Activated CD4-positive, alpha-beta T cell treated with anti-CD3 and anti-CD28 coated beads, Interleukin-2, amount 10 ng/mL, durations not matched to agents 24 days and 14 days (primary cell): ENCODE measurements at regions of chr1 and their contacts with region 1.

Region 1: GRCh38 chr1:54406339-54407153 is at the start of gene SSBP3:
- DNase-seq: peak; percentile 98
- H3K4me3 Mint-ChIP-seq: peak within 1 kb of the TSS; percentile 93
- H3K27ac Mint-ChIP-seq: peak within 1 kb of the TSS; percentile 96
- H3K4me1 Mint-ChIP-seq: peaks cover 64% of the 10 kb centered on the region
- H3K27me3 Mint-ChIP-seq: no peaks in the 10 kb centered on the region
- total RNA-seq, gene SSBP3: 84.1 and 87.9 TPM in 2 replicates

Region 2: GRCh38 chr1:52579415-52579814 is 1827.1 kb before region 1 on chr1:
- intact Hi-C with region 1: no loop called
- DNase-seq: no peak
- H3K4me3 Mint-ChIP-seq: no peak overlapping the region
- H3K27ac Mint-ChIP-seq: peak overlapping the region; percentile 1
- H3K4me1 Mint-ChIP-seq: peaks cover 14% of the 10 kb centered on the region
- H3K27me3 Mint-ChIP-seq: no peaks in the 10 kb centered on the region

Region 3: GRCh38 chr1:53837924-53838652 is 568.5 kb before region 1 on chr1 and contains the start of gene NDC1:
- intact Hi-C with region 1: loop called (anchors 5 kb)
- DNase-seq: peak; percentile 96
- H3K4me3 Mint-ChIP-seq: peak within 1 kb of the TSS; percentile 100
- H3K27ac Mint-ChIP-seq: peak within 1 kb of the TSS; percentile 100
- H3K4me1 Mint-ChIP-seq: peaks cover 25% of the 10 kb centered on the region
- H3K27me3 Mint-ChIP-seq: no peaks in the 10 kb centered on the region
- total RNA-seq, gene NDC1: 39.7 and 40.8 TPM in 2 replicates

Region 4: GRCh38 chr1:54199765-54200518 is 206.6 kb before region 1 on chr1 and contains the starts of genes CYB5RL and MRPL37:
- intact Hi-C with region 1: loop called (anchors 2 kb)
- DNase-seq: peak; percentile 98
- H3K4me3 Mint-ChIP-seq: peak within 1 kb of the TSS; percentile 88
- H3K27ac Mint-ChIP-seq: peak within 1 kb of the TSS; percentile 73
- H3K4me1 Mint-ChIP-seq: peaks cover 29% of the 10 kb centered on the region
- H3K27me3 Mint-ChIP-seq: no peaks in the 10 kb centered on the region
- total RNA-seq, gene CYB5RL: 10.1 and 11.3 TPM in 2 replicates
- total RNA-seq, gene MRPL37: 158 and 162 TPM in 2 replicates

Region 5: DNA sequence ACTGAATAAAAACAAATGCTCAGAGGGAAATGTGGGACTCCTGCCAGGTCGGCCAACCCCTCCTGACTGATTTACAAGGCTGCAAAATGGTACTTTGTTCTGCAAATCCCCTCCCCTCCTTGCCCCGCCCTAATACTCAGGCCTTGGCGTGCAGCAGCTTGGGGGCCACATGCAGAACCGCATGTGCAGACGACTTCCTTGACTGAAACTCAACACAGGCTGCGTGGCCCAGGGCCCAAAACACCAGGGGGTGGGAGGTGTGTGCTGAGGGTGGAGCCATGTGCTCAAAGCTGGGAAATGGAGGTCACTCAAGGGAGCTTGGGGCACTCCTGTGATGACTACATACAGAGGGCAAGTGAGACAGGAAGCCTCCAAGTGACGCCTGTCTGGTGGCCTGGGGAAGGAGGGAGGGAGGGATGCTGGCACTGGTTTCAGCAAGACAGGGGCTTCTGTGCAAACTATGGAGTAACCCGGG is 119.3 kb before region 1 on chr1:
- intact Hi-C with region 1: loop called (anchors 2 kb)
- DNase-seq: peak; percentile 94
- H3K4me3 Mint-ChIP-seq: peak overlapping the region; percentile 81
- H3K27ac Mint-ChIP-seq: peak overlapping the region; percentile 97
- H3K4me1 Mint-ChIP-seq: peaks cover 83% of the 10 kb centered on the region
- H3K27me3 Mint-ChIP-seq: no peaks in the 10 kb centered on the region

Region 6: DNA sequence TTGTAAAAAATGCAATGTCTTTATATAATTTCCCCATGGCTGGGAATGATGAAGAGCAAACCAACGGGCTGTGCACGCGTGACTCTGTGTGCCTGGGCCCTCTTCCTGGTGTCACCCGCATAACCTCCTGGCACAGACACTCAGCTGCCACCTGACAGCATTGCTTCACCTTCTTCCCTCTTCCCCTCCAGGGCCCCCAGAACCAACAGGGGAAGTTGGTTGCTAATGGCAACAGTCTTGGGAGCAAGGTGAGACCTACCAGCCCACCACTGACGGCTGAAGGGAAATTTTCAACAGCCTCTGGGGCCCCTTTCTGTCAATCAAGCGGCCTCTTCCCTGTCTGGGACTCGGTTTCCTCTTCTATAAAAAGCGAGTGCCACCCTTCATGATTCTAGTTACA is 33.6 kb before region 1 on chr1:
- intact Hi-C with region 1: no loop called
- DNase-seq: no peak
- H3K4me3 Mint-ChIP-seq: no peak overlapping the region
- H3K27ac Mint-ChIP-seq: no peak overlapping the region
- H3K4me1 Mint-ChIP-seq: peaks cover 57% of the 10 kb centered on the region
- H3K27me3 Mint-ChIP-seq: no peaks in the 10 kb centered on the region

Region 7: GRCh38 chr1:54391450-54392209 is 14.9 kb before region 1 on chr1:
- intact Hi-C with region 1: no loop called
- DNase-seq: no peak
- H3K4me3 Mint-ChIP-seq: no peak overlapping the region
- H3K27ac Mint-ChIP-seq: no peak overlapping the region
- H3K4me1 Mint-ChIP-seq: peaks cover 27% of the 10 kb centered on the region
- H3K27me3 Mint-ChIP-seq: no peaks in the 10 kb centered on the region

Region 8: GRCh38 chr1:54488779-54489626 is 82.5 kb after region 1 on chr1:
- intact Hi-C with region 1: loop called (anchors 1 kb)
- DNase-seq: peak; percentile 94
- H3K4me3 Mint-ChIP-seq: peak overlapping the region; percentile 86
- H3K27ac Mint-ChIP-seq: peak overlapping the region; percentile 69
- H3K4me1 Mint-ChIP-seq: peaks cover 31% of the 10 kb centered on the region
- H3K27me3 Mint-ChIP-seq: peaks cover 29% of the 10 kb centered on the region

Region 9: DNA sequence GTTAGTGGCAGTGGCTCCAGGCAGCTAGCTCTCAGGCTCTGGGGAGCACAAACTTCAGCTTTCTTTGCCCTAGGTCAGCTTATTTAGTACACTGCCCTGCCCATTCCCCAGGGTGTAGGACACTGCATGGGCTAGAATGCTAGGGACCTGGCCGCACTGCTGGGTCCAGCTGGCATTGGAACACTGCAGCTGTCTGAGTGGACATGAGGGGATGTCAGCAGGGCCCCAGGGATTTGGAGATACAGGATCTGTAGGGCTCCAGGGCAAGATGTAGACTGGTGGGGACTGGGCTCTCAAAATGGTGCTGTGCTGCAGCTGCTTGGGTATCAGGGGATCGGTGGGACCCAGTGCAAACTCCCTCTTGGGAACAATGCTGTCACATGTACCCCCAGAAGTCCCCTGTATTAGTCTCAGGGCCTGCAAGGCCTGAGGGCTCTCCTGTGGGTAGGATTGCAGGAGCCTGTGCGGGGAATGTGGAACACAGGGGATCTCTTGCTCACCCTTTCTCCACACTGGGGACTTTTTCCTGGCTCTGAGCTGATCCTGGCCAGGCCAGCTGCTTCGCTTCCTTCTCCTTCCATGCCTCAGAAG is 419.8 kb after region 1 on chr1:
- intact Hi-C with region 1: no loop called
- DNase-seq: no peak
- H3K4me3 Mint-ChIP-seq: no peak overlapping the region
- H3K27ac Mint-ChIP-seq: no peak overlapping the region
- H3K4me1 Mint-ChIP-seq: no peaks in the 10 kb centered on the region
- H3K27me3 Mint-ChIP-seq: peaks cover 14% of the 10 kb centered on the region